Motor neuron (in vitro differentiated cells): ENCODE measurements at regions of chr18 and their contacts with region 1.

Region 1: DNA sequence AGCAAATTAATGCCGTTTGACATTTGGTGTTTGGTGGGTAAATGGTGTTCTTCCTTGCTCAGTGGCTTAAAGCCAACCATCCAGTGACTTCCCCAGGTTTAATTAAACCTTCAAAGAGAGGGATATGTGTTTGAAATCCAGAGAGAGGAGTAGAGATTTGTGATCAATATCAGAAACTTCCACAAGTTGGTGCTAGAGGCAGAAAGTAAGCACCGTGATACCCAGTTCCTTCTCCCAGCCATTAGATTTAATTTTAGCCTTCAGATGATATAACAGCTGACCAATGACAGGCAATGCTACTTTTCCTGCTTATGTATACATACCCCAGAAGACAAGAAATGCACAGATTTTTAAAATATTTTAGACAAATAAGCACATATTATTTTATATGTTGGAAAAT is 398.5 kb downstream of the CDH2 start:
- ATAC-seq: peak in 3 of 8 experiments; percentile 20 to 55 (median 52)
- H3K4me3 ChIP-seq: no peak overlapping the region
- H3K27ac ChIP-seq: no peak overlapping the region
- H3K4me1 ChIP-seq: no peaks in the 10 kb centered on the region

Region 2: DNA sequence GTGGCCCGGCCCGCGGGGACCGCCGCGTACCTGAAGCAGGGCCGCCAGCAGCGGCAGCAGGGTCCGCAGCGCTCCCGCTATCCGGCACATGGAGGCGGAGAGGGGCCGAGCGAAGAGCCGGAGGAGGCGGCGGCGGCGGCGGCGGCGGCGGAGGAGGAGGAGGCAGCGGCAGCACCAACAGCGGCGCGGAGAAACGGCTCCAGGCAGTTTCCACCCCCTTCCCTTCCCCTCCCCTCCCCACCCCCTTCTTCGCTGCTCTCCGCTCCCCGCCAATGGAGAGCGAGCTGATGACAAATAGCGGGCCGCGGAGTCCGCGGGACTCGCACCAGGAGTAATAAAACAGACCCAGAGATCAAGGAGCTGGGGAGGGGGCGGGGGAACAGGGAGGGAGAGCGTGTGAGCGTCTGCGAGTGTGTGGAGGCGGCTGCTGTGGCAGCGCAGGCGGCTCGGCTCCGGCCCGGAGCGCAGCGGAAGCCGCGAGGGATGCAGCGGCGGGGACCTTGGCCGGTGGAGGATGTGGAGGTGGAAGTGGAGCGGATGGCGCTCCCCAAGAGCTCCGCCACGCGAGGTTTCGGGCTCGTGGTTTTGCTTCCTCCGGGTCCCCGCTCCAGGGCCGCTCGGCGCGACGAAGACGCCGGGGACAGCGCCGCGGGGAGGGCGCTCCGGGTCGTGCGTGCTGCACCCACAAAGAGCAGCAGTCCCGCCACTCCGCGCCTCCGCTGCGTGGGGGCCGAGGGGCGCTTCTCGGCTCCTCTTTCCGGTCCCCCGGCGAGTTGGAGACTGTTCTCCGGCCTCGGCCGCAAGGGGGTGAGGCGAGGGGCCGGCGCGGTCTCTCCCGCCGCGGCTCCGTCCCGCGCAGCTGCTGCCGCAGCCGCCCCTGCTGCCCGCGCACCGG is 398.7 kb after region 1 on chr18 and contains the start of gene CDH2:
- in situ Hi-C with region 1: loop called in 1 of 9 experiments (anchors 25 kb)
- ATAC-seq: peak; percentile 54 to 68 (median 60)
- H3K4me3 ChIP-seq: peak within 1 kb of the TSS; percentile 80 to 100 (median 90)
- H3K27ac ChIP-seq: peak within 1 kb of the TSS; percentile 95 to 96
- H3K4me1 ChIP-seq: peaks cover 0 to 12% of the 10 kb centered on the region in 2 donors
- total RNA-seq, gene CDH2: 0.10 to 181 (median 82.6) TPM